HEK293T (cell line): ENCODE measurements at regions of chr17 and their contacts with region 1.

Region 1: DNA sequence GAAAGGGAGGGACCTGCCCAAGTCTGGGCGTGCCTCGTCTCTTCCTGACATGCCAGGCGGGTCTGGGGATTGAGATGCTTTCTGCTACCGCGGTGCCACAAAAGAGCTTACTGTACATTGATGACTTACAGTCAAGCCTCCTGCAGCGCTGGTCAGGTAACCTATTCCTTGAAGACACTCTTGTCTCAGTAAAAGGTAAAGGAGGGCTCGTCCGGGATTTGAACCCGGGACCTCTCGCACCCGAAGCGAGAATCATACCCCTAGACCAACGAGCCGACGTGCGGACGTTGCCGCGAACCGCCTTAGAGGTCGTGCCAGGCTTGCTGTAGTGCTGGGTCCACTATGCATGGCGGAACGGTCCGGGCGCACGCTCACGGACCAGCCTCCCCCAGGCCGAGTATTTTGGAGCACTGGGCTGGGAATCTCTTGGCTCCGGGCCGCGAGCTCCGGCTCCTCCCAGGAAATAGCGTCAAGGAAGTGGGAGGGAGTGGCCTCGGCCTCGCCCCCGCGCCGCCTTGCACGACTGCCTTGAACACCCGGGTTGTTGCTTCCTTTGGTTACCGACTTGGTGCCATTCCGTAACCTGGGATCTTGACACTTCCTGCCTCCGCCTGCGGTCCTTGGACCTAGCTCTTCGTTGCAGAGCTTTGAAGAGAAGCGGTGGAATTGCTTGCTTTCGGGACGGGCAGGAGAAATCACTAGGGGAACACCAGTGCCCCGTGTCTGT is 12.4 kb upstream of the AURKB start:
- DNase-seq: peak; percentile 64

Region 2: GRCh38 chr17:8080208-8080798 is 142.5 kb before region 1 on chr17:
- CTCF ChIA-PET with region 1: no interaction called
- POLR2A ChIA-PET with region 1: no interaction called
- DNase-seq: no peak

Region 3: GRCh38 chr17:8156246-8156992 is 66.4 kb before region 1 on chr17:
- CTCF ChIA-PET with region 1: no interaction called
- POLR2A ChIA-PET with region 1: interaction called, 16 read pairs
- DNase-seq: peak; percentile 90

Region 4: GRCh38 chr17:8204761-8205555 is 17.8 kb before region 1 on chr17:
- CTCF ChIA-PET with region 1: no interaction called
- POLR2A ChIA-PET with region 1: interaction called, 98 read pairs
- DNase-seq: no peak

Region 5: GRCh38 chr17:8248751-8249607 is 26.2 kb after region 1 on chr17 and contains the start of gene PFAS:
- CTCF ChIA-PET with region 1: interaction called, 9 read pairs
- POLR2A ChIA-PET with region 1: interaction called, 126 read pairs
- DNase-seq: peak; percentile 94

Region 6: GRCh38 chr17:8275421-8276290 is 52.9 kb after region 1 on chr17:
- CTCF ChIA-PET with region 1: no interaction called
- POLR2A ChIA-PET with region 1: no interaction called
- DNase-seq: no peak

Region 7: GRCh38 chr17:8314797-8315763 is 92.3 kb after region 1 on chr17:
- CTCF ChIA-PET with region 1: no interaction called
- POLR2A ChIA-PET with region 1: no interaction called
- DNase-seq: no peak